AG04450 (cell line): ENCODE measurements at regions of chr4 and their contacts with region 1.

Region 1: GRCh38 chr4:126364311-126364911 is 1049.7 kb downstream of the FAT4 start:
- DNase-seq: peak; percentile 29
- H3K4me3 ChIP-seq: no peak overlapping the region
- H3K27ac ChIP-seq: no peak overlapping the region
- H3K27me3 ChIP-seq: no peaks in the 10 kb centered on the region
- CTCF ChIP-seq: no peak

Region 2: DNA sequence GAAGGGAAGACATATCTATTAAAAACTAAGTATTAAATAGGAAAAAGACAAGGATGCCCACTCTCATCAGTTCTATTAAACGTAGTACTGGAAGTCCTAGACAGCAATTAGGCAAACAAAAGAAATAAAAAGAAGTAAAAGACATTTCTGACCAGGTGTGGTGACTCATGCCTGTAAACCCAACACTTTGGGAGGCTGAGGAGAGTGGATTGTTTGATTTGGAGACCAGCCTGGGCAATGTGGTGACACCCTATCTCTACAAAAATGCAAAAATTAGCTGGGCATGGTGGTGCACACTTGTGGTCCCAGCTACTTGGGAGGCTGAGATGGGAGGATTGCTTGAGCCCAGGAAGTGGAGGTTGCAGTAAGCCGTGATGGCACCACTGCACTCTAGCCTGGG is 22.1 kb after region 1 on chr4:
- CTCF ChIA-PET with region 1: no interaction called
- POLR2A ChIA-PET with region 1: no interaction called
- DNase-seq: no peak
- H3K4me3 ChIP-seq: no peak overlapping the region
- H3K27ac ChIP-seq: no peak overlapping the region
- H3K27me3 ChIP-seq: no peaks in the 10 kb centered on the region
- CTCF ChIP-seq: no peak

Region 3: GRCh38 chr4:127622921-127623656 is 1258.7 kb after region 1 on chr4:
- CTCF ChIA-PET with region 1: interaction called, 11 read pairs
- POLR2A ChIA-PET with region 1: no interaction called
- DNase-seq: no peak
- H3K4me3 ChIP-seq: peak overlapping the region; percentile 73
- H3K27ac ChIP-seq: peak overlapping the region; percentile 23
- H3K27me3 ChIP-seq: no peaks in the 10 kb centered on the region
- CTCF ChIP-seq: peak; percentile 47